ENCODE measurements at regions of chr1 and their contacts with region 1.

Region 1: GRCh38 chr1:185373813-185374529 is 56.9 kb upstream of the IVNS1ABP start:
- DNase-seq: no peak
- ATAC-seq: peak; percentile 31
- H3K4me3 Mint-ChIP-seq: no peak overlapping the region
- H3K27ac Mint-ChIP-seq: no peak overlapping the region
- H3K4me1 Mint-ChIP-seq: peaks cover 12% of the 10 kb centered on the region
- H3K27me3 Mint-ChIP-seq: no peaks in the 10 kb centered on the region
- CTCF ChIP-seq: no peak

Region 2: GRCh38 chr1:184805667-184806295 is 568.2 kb before region 1 on chr1:
- CTCF ChIA-PET with region 1: no interaction called
- POLR2A ChIA-PET with region 1: no interaction called
- intact Hi-C with region 1: no loop called
- DNase-seq: peak; percentile 62
- ATAC-seq: peak; percentile 93
- H3K4me3 Mint-ChIP-seq: no peak overlapping the region
- H3K27ac Mint-ChIP-seq: peak overlapping the region; percentile 48
- H3K4me1 Mint-ChIP-seq: peaks cover 13% of the 10 kb centered on the region
- H3K27me3 Mint-ChIP-seq: no peaks in the 10 kb centered on the region
- CTCF ChIP-seq: peak; percentile 82

Region 3: GRCh38 chr1:185409763-185410528 is 36.0 kb after region 1 on chr1:
- CTCF ChIA-PET with region 1: no interaction called
- POLR2A ChIA-PET with region 1: no interaction called
- intact Hi-C with region 1: loop called (anchors 5 kb)
- DNase-seq: no peak
- ATAC-seq: no peak
- H3K4me3 Mint-ChIP-seq: no peak overlapping the region
- H3K27ac Mint-ChIP-seq: no peak overlapping the region
- H3K4me1 Mint-ChIP-seq: peaks cover 57% of the 10 kb centered on the region
- H3K27me3 Mint-ChIP-seq: no peaks in the 10 kb centered on the region
- CTCF ChIP-seq: no peak

Measured in activated B cell treated with CpG ODN at 0.5 μM for 24 hours (primary cell).